AG04449 (cell line): ENCODE measurements at regions of chr6 and their contacts with region 1.

Region 1: GRCh38 chr6:35522660-35523658 is 10.3 kb upstream of the TULP1 start:
- DNase-seq: no peak
- H3K4me3 ChIP-seq: no peak overlapping the region
- CTCF ChIP-seq: peak; percentile 95

Region 2: DNA sequence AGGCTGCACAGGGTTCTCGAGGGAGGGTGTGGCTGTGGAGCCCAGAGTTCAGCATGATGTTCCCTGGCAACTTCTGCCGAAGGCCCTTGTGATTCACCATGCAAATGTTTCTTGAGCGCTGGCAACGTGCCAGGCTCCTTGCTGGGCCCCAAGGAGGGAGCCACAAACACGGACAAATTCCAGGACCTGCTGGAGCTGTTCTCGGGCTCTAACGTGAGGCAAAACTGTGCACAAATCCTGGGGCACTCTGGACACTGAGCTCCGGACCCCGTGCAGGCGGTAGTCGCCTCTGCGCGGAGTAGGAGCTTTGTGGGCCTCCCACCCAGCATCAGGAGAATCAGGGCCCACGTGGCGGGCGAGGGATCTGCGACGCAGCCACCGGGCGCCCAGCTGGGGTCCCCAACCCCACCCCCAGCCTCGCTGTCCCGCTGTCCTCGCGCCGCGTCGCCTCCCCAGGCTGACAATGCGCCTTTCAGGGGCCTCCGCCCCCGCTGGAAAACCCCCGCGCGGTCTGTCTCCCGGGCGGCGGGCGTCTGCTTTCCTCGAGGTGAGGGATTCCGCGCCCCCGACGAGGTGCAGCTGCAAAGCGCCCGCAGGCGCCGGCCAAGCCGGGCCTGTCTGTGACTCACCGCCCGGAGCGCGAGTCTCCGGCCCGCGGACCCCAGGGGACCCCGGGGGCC is 340.9 kb before region 1 on chr6:
- CTCF ChIA-PET with region 1: no interaction called
- POLR2A ChIA-PET with region 1: no interaction called
- DNase-seq: no peak
- H3K4me3 ChIP-seq: no peak overlapping the region
- CTCF ChIP-seq: no peak

Region 3: DNA sequence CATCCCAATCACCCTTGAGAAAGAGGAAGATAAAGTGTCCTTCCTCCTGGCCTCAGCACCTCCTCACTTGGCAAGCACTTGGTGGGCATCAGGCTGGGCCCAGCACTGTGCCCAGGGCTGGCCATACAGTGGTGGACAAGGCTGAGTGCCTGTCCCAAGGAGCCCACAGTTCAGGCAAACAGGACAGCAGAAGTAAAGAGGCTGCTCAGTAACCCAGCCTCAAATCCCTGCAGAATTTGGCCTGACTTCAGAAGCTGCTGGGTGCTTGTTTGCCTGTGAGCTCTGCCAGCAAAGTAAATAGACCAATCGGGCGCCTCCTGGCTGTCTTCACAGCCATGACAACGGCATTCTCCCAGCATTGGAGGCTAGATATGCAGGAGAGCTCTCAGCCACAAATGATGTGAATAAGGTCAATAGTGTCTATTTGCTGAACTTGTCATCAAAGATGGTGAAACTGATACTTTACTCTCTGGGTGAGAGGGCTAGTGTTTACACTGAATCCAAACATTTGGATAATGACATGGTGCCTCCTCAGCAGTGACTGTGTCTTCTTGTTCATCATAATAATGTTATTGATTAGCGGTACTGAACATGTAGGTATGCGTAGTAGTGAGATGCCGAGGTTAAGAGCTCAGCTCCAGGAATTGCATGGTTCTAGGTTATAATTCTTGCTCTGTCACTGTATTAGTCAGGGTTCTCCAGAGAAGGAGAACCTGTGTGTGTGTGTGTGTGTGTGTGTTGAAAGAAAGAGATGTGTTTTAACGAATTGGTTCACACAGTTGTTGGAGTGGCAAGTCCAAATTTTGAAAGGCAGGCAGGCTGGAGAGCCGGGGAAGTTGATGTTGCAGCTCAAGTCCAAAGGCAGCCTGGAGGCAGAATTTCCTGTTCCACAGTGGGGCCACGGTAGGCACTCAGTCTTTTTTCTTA is 107.6 kb before region 1 on chr6:
- CTCF ChIA-PET with region 1: no interaction called
- POLR2A ChIA-PET with region 1: no interaction called
- DNase-seq: peak; percentile 69
- H3K4me3 ChIP-seq: no peak overlapping the region
- CTCF ChIP-seq: peak; percentile 68

Region 4: DNA sequence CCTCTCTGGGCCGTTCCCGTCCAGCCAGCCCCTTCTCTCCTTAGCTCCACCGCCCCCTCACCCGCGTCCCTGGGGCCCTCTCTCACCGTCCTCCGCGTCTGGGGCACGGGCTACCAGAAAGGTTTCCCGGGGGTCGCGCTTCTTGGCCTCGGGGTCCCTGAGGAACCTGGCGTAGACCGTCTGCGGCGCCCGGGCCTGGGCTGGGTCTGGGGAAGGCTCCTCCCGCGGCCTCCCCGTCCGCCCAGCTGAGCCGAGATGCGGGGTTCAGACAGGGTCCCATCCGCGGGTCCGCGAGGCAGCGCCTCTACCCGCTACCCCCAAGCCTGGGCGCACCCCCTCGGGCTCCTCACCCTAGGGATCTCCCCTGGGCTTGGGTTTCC is 11.4 kb before region 1 on chr6:
- CTCF ChIA-PET with region 1: interaction called, 40 read pairs
- POLR2A ChIA-PET with region 1: no interaction called
- DNase-seq: no peak
- H3K4me3 ChIP-seq: no peak overlapping the region
- CTCF ChIP-seq: no peak

Region 5: DNA sequence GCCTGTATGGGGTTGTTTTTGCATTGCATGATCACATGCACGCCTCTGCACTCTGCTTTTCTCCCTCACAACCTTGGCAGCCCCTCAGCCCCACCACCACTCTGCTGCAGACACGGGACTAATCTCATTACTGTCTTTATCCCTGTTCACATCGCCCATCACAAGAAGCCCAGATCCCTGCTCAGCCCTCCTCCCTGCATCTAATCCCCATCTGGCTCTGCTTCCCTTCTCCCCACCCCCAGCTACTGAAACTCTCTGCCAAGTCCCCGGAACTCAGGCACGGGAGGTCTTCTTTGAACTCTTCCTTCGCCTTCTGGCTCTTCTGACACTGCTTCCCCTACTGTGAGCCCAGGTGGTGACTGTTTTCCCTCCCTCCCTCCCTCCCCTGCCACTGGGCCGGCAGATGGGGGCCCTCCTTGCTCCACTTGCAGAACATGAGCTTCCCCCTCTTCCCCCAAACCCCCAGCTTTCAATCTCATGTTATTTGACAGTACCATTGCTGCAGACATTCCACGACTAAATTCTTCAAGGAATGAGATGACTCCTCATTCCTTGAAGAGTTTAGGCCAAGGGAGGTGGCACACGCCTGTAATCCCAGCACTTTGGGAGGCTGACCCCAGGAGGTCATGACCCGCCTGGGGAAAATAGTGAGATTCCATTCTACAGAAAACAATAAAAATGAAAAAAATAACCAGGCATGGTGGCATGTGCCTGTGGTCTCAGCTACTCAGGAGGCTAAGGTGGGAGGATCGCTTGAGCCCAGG is 11.6 kb after region 1 on chr6:
- CTCF ChIA-PET with region 1: interaction called, 36 read pairs
- POLR2A ChIA-PET with region 1: no interaction called
- DNase-seq: no peak
- H3K4me3 ChIP-seq: no peak overlapping the region
- CTCF ChIP-seq: no peak